ENCODE measurements at regions of chr5 and their contacts with region 1.

Region 1: GRCh38 chr5:171970826-171971225 is 35.6 kb downstream of the FBXW11 start:
- DNase-seq: no peak
- H3K4me3 Mint-ChIP-seq: no peak overlapping the region
- H3K27ac Mint-ChIP-seq: no peak overlapping the region
- H3K4me1 Mint-ChIP-seq: peaks cover 20% of the 10 kb centered on the region
- H3K27me3 Mint-ChIP-seq: no peaks in the 10 kb centered on the region
- CTCF ChIP-seq: no peak

Region 2: GRCh38 chr5:172028167-172028566 is 57.3 kb after region 1 on chr5:
- CTCF ChIA-PET with region 1: no interaction called
- intact Hi-C with region 1: loop called (anchors 2 kb)
- DNase-seq: no peak
- H3K4me3 Mint-ChIP-seq: no peak overlapping the region
- H3K27ac Mint-ChIP-seq: no peak overlapping the region
- H3K4me1 Mint-ChIP-seq: no peaks in the 10 kb centered on the region
- H3K27me3 Mint-ChIP-seq: peaks cover 30% of the 10 kb centered on the region
- CTCF ChIP-seq: no peak

Region 3: DNA sequence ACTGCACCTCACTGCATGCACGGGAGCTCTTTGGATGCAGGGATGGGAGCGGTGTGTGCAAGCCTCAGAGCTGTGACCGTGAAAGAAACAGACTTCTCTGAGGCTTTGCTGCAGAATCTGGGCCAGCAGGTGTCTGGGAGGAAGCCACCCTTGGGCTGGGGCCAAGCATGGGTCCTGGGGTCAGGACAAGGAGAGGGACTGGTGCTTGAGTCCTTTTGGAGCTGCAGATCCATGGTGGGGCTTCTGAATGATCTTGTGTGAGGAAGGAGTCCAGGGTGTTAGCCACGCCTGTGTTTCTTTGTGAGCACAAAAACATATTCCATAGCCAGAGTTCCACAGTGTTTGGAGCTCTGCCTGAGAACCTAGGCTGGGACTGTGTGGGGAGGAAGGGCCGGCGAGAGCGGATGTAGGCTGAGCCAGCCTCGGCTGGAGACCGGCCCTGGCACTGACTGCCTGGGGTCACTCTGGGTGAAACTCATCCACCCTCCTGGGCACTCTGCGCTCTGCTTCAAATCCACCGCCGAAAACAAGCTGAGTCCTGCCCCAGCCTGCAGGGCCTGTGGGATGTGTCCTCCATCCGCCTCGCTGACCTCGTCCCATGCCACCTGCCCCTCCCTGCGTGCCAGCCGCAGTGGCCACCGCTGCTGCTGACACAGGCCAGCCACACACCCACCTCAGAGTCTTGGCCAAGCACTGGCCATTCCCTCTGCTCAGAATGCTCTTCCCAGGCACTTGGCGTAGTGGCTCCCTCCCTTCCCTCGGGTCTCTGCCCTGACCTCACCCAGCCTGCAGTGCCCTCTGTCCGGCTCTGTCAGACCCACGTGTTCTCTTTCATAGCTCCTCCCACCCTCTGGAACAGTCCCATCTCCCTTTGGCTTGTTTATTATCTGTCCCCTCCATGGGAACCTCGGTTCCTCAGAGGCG is 890.0 kb after region 1 on chr5:
- CTCF ChIA-PET with region 1: no interaction called
- intact Hi-C with region 1: no loop called
- DNase-seq: no peak
- H3K4me3 Mint-ChIP-seq: peak overlapping the region; percentile 21
- H3K27ac Mint-ChIP-seq: peak overlapping the region; percentile 69
- H3K4me1 Mint-ChIP-seq: peaks cover 63% of the 10 kb centered on the region
- H3K27me3 Mint-ChIP-seq: no peaks in the 10 kb centered on the region
- CTCF ChIP-seq: no peak